MCF 10A (cell line): ENCODE measurements at regions of chr4 and their contacts with region 1.

Region 1: DNA sequence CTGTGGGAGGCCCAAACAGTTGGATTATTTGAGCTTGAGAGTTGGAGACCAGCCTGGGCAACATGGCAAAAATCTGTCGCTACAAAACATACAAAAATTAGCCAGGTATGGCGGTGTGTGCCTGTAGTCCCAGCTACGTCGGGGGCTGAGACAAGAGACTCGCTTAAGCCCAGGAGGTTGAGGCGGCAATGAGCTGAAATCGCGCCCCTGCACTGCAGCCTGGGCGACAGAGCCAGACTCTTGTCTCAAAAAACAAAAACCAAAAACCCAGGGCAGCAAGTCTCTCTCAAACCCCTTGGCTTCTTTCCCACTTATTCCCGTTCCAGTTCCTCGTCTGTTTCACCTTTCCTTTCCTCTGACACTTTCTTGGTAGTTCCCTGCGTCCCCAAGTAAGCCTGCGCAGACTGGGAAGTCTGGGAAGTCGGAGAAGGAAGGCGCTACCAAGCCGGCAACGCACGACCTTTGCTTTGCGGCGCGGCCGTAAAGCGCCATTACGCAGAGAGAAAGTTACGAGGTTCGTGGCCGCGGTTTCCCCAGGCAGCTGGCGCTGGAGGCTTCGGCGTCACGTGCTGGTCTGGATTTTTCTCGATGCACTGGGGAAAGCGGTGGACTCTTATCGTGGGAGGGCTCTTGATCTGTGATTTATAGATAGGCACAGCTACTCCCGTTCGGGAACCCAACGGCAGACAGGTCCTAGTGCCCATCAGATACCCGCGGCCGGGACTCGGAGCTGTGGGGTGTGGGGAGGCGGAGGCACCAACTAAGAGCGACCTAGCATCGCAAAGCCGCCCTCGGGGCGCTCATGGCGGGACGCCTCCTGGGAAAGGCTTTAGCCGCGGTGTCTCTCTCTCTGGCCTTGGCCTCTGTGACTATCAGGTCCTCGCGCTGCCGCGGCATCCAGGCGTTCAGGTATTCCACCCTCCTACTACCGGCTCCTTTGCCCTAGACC is at the start of gene NUDT9:
- DNase-seq: peak; percentile 94
- H3K4me3 Mint-ChIP-seq: peak within 1 kb of the TSS; percentile 98
- H3K27ac Mint-ChIP-seq: peak within 1 kb of the TSS; percentile 100
- H3K4me1 Mint-ChIP-seq: peaks cover 9% of the 10 kb centered on the region
- H3K27me3 Mint-ChIP-seq: no peaks in the 10 kb centered on the region
- CTCF ChIP-seq: no peak
- total RNA-seq, gene NUDT9: 17.6 and 22.5 TPM in 2 replicates

Region 2: DNA sequence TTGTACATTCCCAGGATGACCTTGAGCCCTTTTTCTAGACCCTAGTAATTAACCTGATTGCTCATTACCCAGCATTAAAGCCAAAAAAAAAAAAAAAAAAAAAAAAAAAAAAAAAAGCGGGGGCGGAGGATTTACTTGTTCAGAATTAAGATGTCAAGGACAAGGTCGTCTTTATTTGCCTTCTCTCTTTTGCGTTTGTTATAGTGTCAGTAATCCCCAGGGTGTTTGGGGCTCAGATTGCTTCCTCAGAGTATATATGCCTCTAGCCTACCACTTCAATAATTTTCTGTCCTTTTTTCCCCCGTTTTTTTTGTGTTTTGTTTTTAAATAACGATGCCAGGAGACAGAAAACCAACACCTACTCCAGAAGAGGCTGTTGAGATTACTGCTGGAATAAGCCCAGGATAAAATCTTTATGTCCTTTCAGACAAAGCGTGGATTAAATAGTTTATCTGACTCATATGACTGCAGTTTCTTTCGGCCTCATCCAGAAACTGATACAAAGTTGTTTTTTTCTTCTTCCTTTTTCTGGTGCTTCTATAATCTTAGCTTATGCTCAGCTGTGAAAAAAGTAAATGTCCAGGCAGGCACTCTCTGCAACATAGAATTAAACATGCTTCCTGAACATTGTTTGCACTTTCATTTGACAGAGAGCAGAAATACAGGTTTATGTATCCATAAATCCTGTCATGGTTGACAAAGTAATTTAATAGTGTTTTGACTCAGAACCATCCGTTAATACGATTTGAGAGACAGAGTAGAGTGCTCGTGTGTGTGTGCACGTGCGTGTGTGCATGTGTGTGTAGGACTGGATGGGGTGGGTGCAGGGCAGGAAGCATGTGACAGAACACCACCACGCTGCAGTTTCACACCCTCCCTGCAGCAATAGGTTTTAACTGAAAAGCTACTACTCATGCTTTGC is 348.9 kb before region 1 on chr4:
- CTCF ChIA-PET with region 1: no interaction called
- POLR2A ChIA-PET with region 1: no interaction called
- intact Hi-C with region 1: no loop called
- DNase-seq: no peak
- H3K4me3 Mint-ChIP-seq: no peak overlapping the region
- H3K27ac Mint-ChIP-seq: no peak overlapping the region
- H3K4me1 Mint-ChIP-seq: peaks cover 30% of the 10 kb centered on the region
- H3K27me3 Mint-ChIP-seq: no peaks in the 10 kb centered on the region
- CTCF ChIP-seq: no peak

Region 3: DNA sequence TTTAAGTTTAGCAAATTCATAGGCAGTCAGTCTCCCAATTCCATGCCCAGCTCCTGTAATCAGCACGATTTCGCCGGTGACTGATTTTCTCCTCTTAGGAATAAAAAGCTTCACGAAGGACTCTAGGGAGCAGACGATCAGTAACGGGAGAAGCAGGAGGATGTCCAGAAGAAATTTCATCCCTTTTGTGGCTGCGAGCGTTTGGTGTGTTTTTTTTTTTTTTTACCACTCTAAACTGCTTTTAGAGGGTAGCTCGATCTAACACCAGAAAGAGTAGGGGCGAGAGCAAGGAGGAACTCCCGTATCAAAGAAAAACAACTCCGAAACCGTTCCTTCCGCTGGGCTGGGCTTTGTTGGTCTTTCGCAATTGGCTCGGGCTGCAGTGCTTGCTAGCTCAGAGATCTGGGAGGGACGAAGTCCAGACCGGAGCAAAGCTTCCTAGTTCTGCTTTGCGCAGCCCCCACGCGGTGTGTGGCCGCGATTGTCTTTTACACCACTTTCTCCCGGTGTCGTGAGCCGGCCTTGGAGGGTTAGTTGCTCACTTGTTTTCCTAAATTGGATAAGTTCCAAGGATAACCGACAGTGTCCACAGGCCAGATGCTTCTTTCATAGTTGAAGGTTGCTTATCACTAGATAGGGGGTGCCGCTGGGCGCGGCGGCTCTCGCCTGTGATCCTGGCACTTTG is 31.3 kb before region 1 on chr4 and contains the start of gene HSD17B11:
- CTCF ChIA-PET with region 1: interaction called, 3 read pairs
- POLR2A ChIA-PET with region 1: interaction called, 54 read pairs
- intact Hi-C with region 1: loop called (anchors 1 kb)
- DNase-seq: peak; percentile 92
- H3K4me3 Mint-ChIP-seq: peak within 1 kb of the TSS; percentile 93
- H3K27ac Mint-ChIP-seq: peak within 1 kb of the TSS; percentile 88
- H3K4me1 Mint-ChIP-seq: peaks cover 20% of the 10 kb centered on the region
- H3K27me3 Mint-ChIP-seq: no peaks in the 10 kb centered on the region
- CTCF ChIP-seq: no peak
- total RNA-seq, gene HSD17B11: 4.3 and 4.8 TPM in 2 replicates

Region 4: GRCh38 chr4:87410679-87411078 is 11.7 kb before region 1 on chr4:
- CTCF ChIA-PET with region 1: no interaction called
- POLR2A ChIA-PET with region 1: interaction called, 12 read pairs
- intact Hi-C with region 1: no loop called
- DNase-seq: no peak
- H3K4me3 Mint-ChIP-seq: no peak overlapping the region
- H3K27ac Mint-ChIP-seq: no peak overlapping the region
- H3K4me1 Mint-ChIP-seq: peaks cover 7% of the 10 kb centered on the region
- H3K27me3 Mint-ChIP-seq: no peaks in the 10 kb centered on the region
- CTCF ChIP-seq: no peak

Region 5: GRCh38 chr4:87961993-87962392 is 539.6 kb after region 1 on chr4:
- CTCF ChIA-PET with region 1: no interaction called
- POLR2A ChIA-PET with region 1: no interaction called
- intact Hi-C with region 1: no loop called
- DNase-seq: peak; percentile 76
- H3K4me3 Mint-ChIP-seq: no peak overlapping the region
- H3K27ac Mint-ChIP-seq: peak overlapping the region; percentile 46
- H3K4me1 Mint-ChIP-seq: no peaks in the 10 kb centered on the region
- H3K27me3 Mint-ChIP-seq: no peaks in the 10 kb centered on the region
- CTCF ChIP-seq: no peak